AG04450 (cell line): ENCODE measurements at regions of chr12 and their contacts with region 1.

Region 1: DNA sequence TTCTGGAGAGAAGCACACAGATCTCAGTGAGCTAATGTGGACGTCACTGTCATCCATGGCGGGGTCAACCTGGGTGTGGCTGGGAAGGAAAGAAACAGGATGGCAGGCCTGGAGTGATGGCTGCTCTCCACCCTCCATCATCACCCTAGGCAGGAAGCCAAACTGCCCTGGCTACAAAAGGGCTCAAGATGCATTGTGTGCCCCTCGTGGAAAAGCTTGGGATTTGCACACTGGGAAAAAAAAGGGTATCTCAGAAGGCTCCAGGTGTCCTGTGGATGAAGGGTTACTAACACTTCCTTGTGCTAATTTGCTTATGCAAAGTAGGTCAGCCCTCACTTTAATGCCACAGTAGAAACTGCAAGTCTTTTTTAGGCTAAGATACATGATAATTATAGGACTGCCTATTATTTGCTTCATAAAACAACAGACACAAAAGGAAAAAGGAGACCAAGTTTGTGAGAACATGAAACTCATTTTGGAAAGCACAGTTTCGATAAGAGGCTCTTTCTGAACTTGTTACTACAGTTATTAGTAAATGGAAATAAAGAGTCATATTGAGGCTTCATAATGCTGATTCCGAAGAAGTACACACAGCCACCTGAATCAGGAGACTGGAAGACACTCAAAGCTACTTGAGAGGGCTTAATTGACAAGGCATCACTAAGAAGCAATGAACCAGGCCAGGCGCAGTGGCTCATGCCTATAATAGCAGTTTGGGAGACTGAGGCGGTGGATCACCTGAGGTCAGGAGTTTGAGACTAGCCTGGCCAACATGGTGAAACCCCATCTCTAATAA is 18.9 kb downstream of the RFC5 start:
- DNase-seq: no peak
- H3K4me3 ChIP-seq: no peak overlapping the region
- H3K27ac ChIP-seq: peak overlapping the region; percentile 21
- H3K27me3 ChIP-seq: no peaks in the 10 kb centered on the region
- CTCF ChIP-seq: 0 out of 2 replicates have a peak, but pooled peaks have one; percentile 18

Region 2: DNA sequence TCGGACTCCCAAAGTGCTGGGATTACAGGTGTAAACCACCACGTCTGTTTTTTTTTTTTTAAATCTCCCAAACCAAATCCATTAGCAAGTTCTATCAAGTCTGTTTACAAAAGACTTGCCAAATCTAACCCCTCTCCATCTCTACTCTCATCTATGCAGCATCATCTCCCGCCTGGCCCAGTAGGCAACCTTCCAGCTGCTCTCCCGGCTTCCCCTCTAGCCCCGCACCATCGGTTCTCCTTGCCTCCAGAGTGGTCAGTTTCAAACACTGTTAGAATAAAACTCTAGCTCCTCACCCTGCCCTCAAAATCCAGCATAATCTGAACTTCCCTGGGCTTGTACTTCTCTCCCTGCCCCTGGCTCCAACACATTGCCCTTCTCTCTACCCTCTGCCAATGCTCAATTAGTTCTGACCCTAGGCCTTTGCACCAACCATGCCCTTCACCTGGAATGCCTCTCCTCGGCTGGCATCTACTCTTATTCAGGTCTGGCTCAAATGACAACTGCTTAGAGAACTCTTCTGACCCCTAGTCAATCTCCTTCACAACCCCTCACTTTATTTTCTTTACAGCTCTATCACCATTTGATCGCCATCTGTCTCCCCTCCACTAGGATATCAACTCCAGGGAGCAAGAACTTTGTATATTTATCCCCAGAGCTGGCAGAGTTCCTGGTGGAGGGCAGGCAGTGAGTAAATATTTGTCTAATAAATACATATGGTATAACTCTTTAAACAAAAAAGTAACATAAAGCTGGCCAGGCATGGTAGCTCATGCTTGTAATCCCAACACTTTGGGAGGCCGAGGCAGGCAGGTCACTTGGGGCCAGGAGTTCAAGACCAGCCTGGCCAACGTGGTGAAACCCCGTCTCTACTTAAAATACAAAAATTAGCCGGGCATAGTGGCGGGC is 20.7 kb after region 1 on chr12:
- CTCF ChIA-PET with region 1: interaction called, 15 read pairs
- POLR2A ChIA-PET with region 1: interaction called, 5 read pairs
- DNase-seq: no peak
- H3K4me3 ChIP-seq: no peak overlapping the region
- H3K27ac ChIP-seq: peak overlapping the region; percentile 31
- H3K27me3 ChIP-seq: no peaks in the 10 kb centered on the region
- CTCF ChIP-seq: no peak